Dendritic cell treated with granulocyte-macrophage colony-stimulating factor and Interleukin-4, amounts not matched to agents 40 ng/mL and 50 ng/mL, for 4 days (primary cell): ENCODE measurements at regions of chr17 and their contacts with region 1.

Region 1: DNA sequence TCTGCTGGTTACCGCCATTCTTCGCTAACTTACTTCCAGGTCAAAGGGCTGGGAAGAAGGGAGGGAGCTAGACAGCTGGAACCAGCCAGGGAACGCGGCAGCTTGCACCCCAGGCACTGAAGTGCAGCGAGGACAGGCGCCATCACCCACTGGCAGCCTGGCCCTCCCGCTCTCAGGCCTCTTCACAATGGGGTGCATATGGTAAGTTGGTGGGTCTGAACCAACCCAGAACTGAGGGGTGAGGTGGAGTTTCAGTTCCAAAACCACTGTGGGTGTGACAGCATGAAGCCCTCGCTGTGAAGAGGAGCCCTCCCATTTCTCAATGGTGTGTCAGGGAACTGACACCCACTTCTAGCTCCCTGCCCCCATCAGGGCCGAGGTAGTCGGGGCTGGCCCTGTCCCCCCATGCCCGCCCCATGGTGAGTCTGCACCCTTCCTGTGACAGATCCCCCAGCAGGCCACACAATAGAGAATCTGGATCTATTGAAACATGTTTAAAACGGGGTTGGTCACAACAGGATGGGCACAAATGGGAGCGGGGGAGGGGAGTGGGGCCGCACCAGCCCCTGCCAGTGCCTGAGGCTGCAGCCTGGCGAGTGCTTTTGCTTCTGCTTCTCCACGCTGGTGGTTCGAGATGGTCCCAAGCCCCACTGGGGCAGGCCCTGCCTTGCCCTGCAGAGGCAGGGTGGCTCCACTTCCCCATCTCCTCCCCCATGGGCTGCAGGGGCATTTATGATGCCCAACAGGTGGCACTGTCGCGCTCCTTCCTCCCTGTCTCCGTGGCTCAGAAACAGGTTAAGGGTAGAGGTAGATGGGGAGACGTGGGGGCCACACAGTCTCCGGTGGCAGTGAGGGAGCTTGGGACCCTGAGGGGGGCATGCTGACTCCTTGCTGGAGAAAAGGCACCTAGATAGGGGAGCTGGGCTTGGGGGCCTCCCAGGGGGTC is 2.3 kb downstream of the LIMD2 start:
- H3K4me3 Mint-ChIP-seq: peak overlapping the region; percentile 90
- H3K27ac Mint-ChIP-seq: peak overlapping the region; percentile 84
- H3K4me1 Mint-ChIP-seq: peaks cover 79% of the 10 kb centered on the region
- H3K27me3 Mint-ChIP-seq: no peaks in the 10 kb centered on the region

Region 2: DNA sequence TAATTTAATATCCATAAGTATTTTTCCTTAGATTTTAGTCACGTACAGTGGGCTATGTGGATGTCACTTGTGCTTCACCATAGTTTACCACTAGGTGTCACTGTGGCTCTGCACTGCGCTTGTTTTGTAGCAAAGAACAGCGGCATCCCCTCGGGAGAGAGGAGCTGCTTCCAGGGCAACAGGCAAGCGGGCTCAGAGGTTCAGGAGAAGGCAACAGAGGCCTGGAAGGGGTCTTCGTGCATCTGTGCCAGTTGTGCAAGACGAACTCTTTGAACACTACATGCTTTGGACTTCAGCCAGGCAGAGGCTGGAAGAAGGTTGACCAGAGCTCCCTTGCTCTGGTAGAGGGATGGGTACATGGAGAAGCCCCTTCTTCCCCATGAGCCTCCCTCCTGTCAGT is 272.1 kb before region 1 on chr17:
- intact Hi-C with region 1: loop called (anchors 5 kb)
- H3K4me3 Mint-ChIP-seq: no peak overlapping the region
- H3K27ac Mint-ChIP-seq: no peak overlapping the region
- H3K4me1 Mint-ChIP-seq: peaks cover 21% of the 10 kb centered on the region
- H3K27me3 Mint-ChIP-seq: peaks cover 6% of the 10 kb centered on the region

Region 3: DNA sequence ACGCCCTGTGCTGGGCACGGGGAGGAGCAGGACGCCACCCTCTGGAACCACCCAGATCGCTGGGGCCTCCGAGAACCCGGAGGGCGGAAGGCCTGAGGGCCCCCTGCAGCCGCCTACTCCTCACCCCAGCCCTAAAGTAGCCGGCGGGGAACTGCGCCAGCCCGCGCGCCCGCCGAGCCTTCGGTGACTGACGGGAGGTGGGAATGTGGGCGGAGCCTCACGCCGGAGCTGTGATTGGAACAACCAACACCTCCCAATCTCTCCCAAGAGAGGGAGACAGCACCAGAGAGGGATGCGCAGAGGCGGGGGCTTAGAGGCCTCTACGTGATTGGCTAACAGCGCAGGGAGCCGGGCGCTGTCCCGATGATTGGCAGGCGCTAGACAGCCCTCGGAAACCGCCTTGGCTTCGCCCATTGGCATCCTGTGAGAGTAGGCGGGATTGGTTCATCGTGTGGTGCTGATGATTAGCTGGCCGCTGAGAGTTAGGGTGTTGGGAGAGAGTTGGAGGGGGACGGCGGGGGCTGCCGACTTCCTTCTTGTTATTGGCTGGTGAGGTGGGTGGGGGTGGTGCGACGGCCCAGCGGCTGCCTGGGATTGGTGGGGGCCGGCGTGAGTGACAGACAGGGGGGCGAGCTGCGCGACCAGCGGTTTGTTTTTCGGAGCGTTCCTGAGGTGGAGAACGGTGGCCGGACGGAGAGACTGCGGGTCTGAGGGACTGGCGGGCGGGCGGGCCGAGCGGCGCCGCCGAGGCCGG is 75.7 kb before region 1 on chr17 and contains the start of gene MAP3K3:
- intact Hi-C with region 1: loop called (anchors 2 kb)
- H3K4me3 Mint-ChIP-seq: peak within 1 kb of the TSS; percentile 99
- H3K27ac Mint-ChIP-seq: peak within 1 kb of the TSS; percentile 93
- H3K4me1 Mint-ChIP-seq: peaks cover 30% of the 10 kb centered on the region
- H3K27me3 Mint-ChIP-seq: peaks cover 6% of the 10 kb centered on the region

Region 4: DNA sequence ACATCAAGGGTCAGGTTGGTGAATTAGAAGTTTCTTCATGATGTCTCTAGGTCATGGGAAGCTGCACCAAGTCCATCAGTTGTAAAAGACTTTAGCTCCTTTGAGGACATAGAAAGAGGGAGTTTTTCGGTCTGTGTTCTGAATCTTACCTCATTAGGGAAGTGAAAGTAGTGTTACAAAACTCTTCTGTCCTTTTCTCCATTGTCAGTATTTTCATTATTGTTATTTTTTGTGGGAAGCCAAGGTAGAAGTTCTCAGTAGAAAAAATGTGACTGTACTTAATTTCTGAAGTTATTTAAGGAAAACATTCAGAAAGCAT is 51.2 kb before region 1 on chr17:
- intact Hi-C with region 1: no loop called
- H3K4me3 Mint-ChIP-seq: no peak overlapping the region
- H3K27ac Mint-ChIP-seq: peak overlapping the region; percentile 82
- H3K4me1 Mint-ChIP-seq: peaks cover 75% of the 10 kb centered on the region
- H3K27me3 Mint-ChIP-seq: no peaks in the 10 kb centered on the region

Region 5: DNA sequence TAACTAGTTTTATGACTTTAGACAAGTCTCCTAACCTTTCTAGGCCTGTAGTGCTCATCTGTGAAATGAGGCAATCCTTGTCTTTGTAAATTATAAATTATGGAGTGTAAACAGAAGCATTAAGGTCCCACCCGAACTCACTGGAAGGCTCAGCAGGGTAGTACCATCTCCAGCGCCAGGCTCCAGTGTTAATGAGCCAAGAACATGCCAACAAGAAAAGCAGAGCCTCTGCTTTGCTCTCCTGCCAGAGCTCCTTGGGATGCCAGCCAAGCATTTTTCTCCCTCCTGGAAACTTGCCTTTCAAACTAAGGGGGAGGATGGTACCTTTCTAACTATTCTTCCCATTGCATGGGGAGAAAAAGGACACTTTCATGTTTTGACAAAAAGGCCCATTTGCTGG is 12.6 kb before region 1 on chr17:
- intact Hi-C with region 1: no loop called
- H3K4me3 Mint-ChIP-seq: no peak overlapping the region
- H3K27ac Mint-ChIP-seq: no peak overlapping the region
- H3K4me1 Mint-ChIP-seq: peaks cover 25% of the 10 kb centered on the region
- H3K27me3 Mint-ChIP-seq: no peaks in the 10 kb centered on the region

Region 6: GRCh38 chr17:63741221-63742049 is 43.8 kb after region 1 on chr17 and contains the start of gene STRADA:
- intact Hi-C with region 1: loop called (anchors 1 kb)
- H3K4me3 Mint-ChIP-seq: peak within 1 kb of the TSS; percentile 99
- H3K27ac Mint-ChIP-seq: peak within 1 kb of the TSS; percentile 98
- H3K4me1 Mint-ChIP-seq: peaks cover 25% of the 10 kb centered on the region
- H3K27me3 Mint-ChIP-seq: no peaks in the 10 kb centered on the region

Region 7: GRCh38 chr17:63773381-63774140 is 75.9 kb after region 1 on chr17 and contains the start of gene CCDC47:
- intact Hi-C with region 1: loop called (anchors 1 kb)
- H3K4me3 Mint-ChIP-seq: peak within 1 kb of the TSS; percentile 98
- H3K27ac Mint-ChIP-seq: peak within 1 kb of the TSS; percentile 98
- H3K4me1 Mint-ChIP-seq: peaks cover 50% of the 10 kb centered on the region
- H3K27me3 Mint-ChIP-seq: no peaks in the 10 kb centered on the region

Region 8: GRCh38 chr17:63827002-63827771 is 129.6 kb after region 1 on chr17 and contains the starts of genes FTSJ3 and PSMC5:
- intact Hi-C with region 1: loop called (anchors 5 kb)
- H3K4me3 Mint-ChIP-seq: peak within 1 kb of the TSS; percentile 90
- H3K27ac Mint-ChIP-seq: peak within 1 kb of the TSS; percentile 94
- H3K4me1 Mint-ChIP-seq: peaks cover 53% of the 10 kb centered on the region
- H3K27me3 Mint-ChIP-seq: no peaks in the 10 kb centered on the region